BJ (cell line): ENCODE measurements at regions of chr10 and their contacts with region 1.

Region 1: GRCh38 chr10:102450194-102450938 is 977 bp downstream of the C10orf95 start:
- DNase-seq: no peak
- H3K4me3 ChIP-seq: peak overlapping the region; percentile 72
- H3K27me3 ChIP-seq: no peaks in the 10 kb centered on the region
- CTCF ChIP-seq: no peak

Region 2: GRCh38 chr10:102656026-102656425 is 205.7 kb after region 1 on chr10:
- CTCF ChIA-PET with region 1: no interaction called
- POLR2A ChIA-PET with region 1: interaction called, 12 read pairs
- DNase-seq: no peak
- H3K4me3 ChIP-seq: no peak overlapping the region
- H3K27me3 ChIP-seq: no peaks in the 10 kb centered on the region
- CTCF ChIP-seq: no peak